ENCODE measurements at regions of chr11 and their contacts with region 1.

Region 1: DNA sequence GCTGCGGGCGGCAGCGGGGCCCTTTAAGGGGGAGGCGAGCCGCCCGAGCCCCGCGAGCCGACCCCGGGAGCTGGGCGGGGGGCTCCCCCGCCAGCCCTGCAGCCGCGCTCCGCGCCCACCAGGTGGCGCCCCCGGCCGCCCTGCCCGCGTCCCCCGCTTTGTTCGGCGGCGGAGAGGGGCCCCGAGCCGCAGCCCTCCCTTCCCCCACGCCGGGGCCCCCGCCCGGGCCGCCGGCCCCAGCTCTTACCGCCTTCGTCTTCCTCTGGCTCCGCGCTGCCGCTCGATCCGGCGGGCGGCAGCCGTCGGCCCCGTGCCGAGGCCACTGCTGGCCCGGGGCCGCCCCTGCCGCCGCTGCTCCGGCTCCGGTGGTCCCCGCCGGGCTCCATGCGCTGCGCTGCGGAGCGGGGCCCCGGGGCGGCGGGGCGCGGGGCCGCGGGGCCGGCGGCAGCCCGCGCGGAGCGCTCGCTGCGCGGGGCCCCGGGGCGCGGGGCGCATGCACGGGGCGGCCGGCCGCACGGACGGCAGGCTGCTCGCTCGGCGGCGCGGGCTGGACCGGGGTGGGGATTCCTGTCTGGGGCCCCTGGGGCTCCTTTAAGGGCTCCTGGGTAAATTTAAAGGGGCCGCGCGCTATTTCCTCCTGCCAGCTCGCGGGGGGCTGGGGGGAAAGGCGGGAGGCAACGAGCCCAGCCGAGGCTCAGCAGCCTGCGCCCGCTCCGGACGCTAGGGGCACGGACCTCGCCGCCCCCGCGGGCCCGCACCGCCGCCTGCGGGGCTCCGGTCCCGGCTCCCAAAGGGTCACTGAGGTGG is at the start of gene ZFTA:
- DNase-seq: peak; percentile 75 to 84
- H3K4me3 ChIP-seq: peak within 1 kb of the TSS; percentile 77
- H3K4me3 Mint-ChIP-seq: peak within 1 kb of the TSS; percentile 99
- H3K27ac Mint-ChIP-seq: peak within 1 kb of the TSS; percentile 96
- H3K4me1 ChIP-seq: peaks cover 37% of the 10 kb centered on the region
- H3K4me1 Mint-ChIP-seq: peaks cover 39% of the 10 kb centered on the region
- H3K27me3 ChIP-seq: no peaks in the 10 kb centered on the region
- H3K27me3 Mint-ChIP-seq: no peaks in the 10 kb centered on the region
- CTCF ChIP-seq: peak; percentile 36 to 75
- total RNA-seq, gene ZFTA: 30.8 and 31.0 TPM in 2 replicates

Region 2: GRCh38 chr11:63719977-63720376 is 48.5 kb before region 1 on chr11:
- CTCF ChIA-PET with region 1: no interaction called
- POLR2A ChIA-PET with region 1: no interaction called
- intact Hi-C with region 1: no loop called
- DNase-seq: no peak
- H3K4me3 ChIP-seq: no peak overlapping the region
- H3K4me3 Mint-ChIP-seq: no peak overlapping the region
- H3K27ac Mint-ChIP-seq: no peak overlapping the region
- H3K4me1 ChIP-seq: no peaks in the 10 kb centered on the region
- H3K4me1 Mint-ChIP-seq: peaks cover 1% of the 10 kb centered on the region
- H3K27me3 ChIP-seq: no peaks in the 10 kb centered on the region
- H3K27me3 Mint-ChIP-seq: no peaks in the 10 kb centered on the region
- CTCF ChIP-seq: no peak

Region 3: DNA sequence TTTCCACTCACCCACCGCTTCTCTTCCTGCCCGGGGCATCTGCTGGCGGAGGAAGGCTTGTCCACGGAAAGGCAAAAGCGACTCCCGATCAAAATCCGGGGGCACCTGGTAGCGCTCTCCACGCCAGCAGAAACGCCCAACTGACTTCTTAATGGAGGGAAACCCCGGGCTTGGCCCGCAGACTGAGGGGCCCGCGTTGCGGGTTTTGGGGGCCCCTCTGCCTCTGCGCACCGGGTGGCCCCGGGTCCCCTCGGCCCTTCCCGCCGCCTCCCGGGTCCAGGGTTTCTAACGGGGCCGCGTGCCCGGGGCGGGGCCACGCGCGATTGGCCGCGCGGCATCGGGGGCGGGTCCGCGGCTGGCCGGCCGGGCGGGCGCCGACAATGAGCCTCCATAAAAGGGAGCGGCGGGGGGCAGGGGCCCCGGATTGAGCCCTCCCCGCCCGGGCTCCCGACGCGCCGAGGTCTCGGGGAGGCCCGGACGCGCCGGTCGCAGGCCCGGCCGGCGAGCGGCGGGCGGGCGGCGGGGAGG is 44.7 kb after region 1 on chr11 and contains the start of gene SPINDOC:
- CTCF ChIA-PET with region 1: no interaction called
- POLR2A ChIA-PET with region 1: interaction called, 3 read pairs
- intact Hi-C with region 1: loop called (anchors 1 kb)
- DNase-seq: peak; percentile 77 to 90
- H3K4me3 ChIP-seq: peak within 1 kb of the TSS; percentile 89
- H3K4me3 Mint-ChIP-seq: peak within 1 kb of the TSS; percentile 84
- H3K27ac Mint-ChIP-seq: peak within 1 kb of the TSS; percentile 72
- H3K4me1 ChIP-seq: peaks cover 7% of the 10 kb centered on the region; the same call in 1 of the 2 replicates
- H3K4me1 Mint-ChIP-seq: peaks cover 30% of the 10 kb centered on the region
- H3K27me3 ChIP-seq: no peaks in the 10 kb centered on the region
- H3K27me3 Mint-ChIP-seq: no peaks in the 10 kb centered on the region
- CTCF ChIP-seq: no peak
- total RNA-seq, gene SPINDOC: 71.2 and 72.1 TPM in 2 replicates

Region 4: DNA sequence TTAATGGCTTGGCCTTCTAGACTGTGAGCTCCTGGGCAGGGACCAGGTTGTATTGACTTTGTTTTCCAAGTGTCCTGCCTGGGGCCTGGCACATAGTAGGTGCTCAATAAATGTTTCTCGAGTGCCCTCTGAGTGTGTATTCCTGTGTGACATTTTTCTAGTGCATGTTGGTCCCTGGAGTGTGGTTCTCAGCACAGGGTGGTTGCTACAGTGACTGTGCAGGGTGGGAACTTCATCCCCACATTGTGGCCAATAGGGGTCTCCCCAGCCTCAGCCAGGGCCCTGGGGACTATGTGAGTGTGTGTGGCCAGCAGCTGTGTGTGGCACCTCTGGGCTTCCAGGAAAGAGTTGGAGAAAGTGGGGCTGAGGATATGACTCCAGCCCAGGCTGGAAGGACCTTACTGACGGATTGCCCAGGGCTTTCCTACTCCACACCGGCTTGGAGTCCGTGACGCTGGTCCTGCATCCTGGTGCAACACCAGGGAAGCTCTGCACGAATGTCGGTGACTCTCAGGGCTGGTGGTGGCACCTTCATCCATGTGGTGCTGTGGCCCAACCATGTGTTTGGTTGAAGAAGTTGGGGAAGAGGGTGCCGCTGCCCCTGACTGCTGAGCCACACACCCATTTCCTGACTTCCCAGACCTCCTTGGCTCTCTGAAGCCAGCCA is 61.5 kb after region 1 on chr11:
- CTCF ChIA-PET with region 1: interaction called, 3 read pairs
- POLR2A ChIA-PET with region 1: no interaction called
- intact Hi-C with region 1: loop called (anchors 5 kb)
- DNase-seq: peak; percentile 55 to 64
- H3K4me3 ChIP-seq: no peak overlapping the region
- H3K4me3 Mint-ChIP-seq: no peak overlapping the region
- H3K27ac Mint-ChIP-seq: no peak overlapping the region
- H3K4me1 ChIP-seq: no peaks in the 10 kb centered on the region
- H3K4me1 Mint-ChIP-seq: no peaks in the 10 kb centered on the region
- H3K27me3 ChIP-seq: no peaks in the 10 kb centered on the region
- H3K27me3 Mint-ChIP-seq: no peaks in the 10 kb centered on the region
- CTCF ChIP-seq: peak; percentile 45 to 62

Region 5: DNA sequence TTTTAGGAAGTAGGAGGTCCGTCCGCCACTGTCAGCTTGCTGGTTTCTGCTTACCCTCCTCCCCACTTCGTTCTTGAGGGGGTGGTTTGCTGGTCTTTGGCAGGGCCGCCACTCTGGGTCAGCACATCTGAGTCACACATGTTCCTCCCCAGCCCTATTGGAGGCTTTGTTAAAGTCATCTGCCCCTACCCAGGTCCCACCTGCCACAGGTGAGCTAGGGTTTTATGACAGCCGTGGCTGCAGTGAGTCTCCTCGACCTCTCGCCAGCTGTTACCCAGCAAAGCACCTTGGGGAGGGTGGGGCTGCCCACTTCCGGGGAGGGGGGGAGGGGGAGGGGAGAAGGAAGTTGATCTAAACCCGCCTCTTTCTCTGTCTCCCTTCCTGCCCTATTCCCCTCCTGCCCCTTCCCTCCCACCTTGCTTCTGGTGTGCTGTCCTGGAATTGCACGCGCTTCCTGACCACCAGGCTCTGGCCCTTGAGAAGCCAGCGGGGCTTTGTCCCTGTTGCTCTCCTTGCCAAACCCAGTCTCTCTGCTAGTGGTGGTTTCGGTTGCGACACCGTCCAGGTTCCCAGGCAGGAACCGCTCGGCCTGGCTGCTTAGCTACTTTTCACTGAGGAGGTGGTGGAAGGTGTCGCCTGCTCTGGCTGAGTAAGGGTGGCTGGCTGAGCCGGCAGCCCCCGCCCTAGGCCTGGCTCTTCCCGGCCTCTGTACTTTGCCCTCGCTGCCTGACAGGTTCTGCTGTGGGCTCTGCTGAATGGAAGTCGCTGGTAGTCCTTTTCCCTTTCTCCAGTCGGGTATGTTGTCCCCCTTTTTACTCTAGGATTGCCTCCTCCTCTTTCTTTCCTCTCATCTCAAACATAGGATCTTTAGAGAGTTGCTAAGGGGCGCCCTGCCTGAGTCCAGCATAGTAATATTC is 120.0 kb after region 1 on chr11:
- CTCF ChIA-PET with region 1: no interaction called
- POLR2A ChIA-PET with region 1: no interaction called
- intact Hi-C with region 1: loop called (anchors 5 kb)
- DNase-seq: peak; percentile 87 to 92
- H3K4me3 ChIP-seq: peak overlapping the region; percentile 56
- H3K4me3 Mint-ChIP-seq: peak overlapping the region; percentile 95
- H3K27ac Mint-ChIP-seq: peak overlapping the region; percentile 98
- H3K4me1 ChIP-seq: peaks cover 33% of the 10 kb centered on the region
- H3K4me1 Mint-ChIP-seq: peaks cover 34% of the 10 kb centered on the region
- H3K27me3 ChIP-seq: no peaks in the 10 kb centered on the region
- H3K27me3 Mint-ChIP-seq: no peaks in the 10 kb centered on the region
- CTCF ChIP-seq: no peak

Region 6: GRCh38 chr11:63945477-63946163 is 177.2 kb after region 1 on chr11:
- CTCF ChIA-PET with region 1: interaction called, 9 read pairs
- POLR2A ChIA-PET with region 1: no interaction called
- intact Hi-C with region 1: loop called (anchors 2 kb)
- DNase-seq: peak; percentile 66 to 78
- H3K4me3 ChIP-seq: no peak overlapping the region
- H3K4me3 Mint-ChIP-seq: no peak overlapping the region
- H3K27ac Mint-ChIP-seq: no peak overlapping the region
- H3K4me1 ChIP-seq: peaks cover 4% of the 10 kb centered on the region; the same call in 1 of the 2 replicates
- H3K4me1 Mint-ChIP-seq: peaks cover 2% of the 10 kb centered on the region
- H3K27me3 ChIP-seq: no peaks in the 10 kb centered on the region
- H3K27me3 Mint-ChIP-seq: no peaks in the 10 kb centered on the region
- CTCF ChIP-seq: peak; percentile 67 to 70